Caco-2 (cell line): ENCODE measurements at regions of chr13 and their contacts with region 1.

Region 1: GRCh38 chr13:38914070-38914469 is 76.6 kb downstream of the STOML3 start:
- DNase-seq: no peak
- H3K4me3 ChIP-seq: no peak overlapping the region
- H3K4me3 Mint-ChIP-seq: no peak overlapping the region
- H3K27ac Mint-ChIP-seq: no peak overlapping the region
- H3K4me1 ChIP-seq: peaks cover 5% of the 10 kb centered on the region
- H3K4me1 Mint-ChIP-seq: peaks cover 6% of the 10 kb centered on the region
- H3K27me3 ChIP-seq: no peaks in the 10 kb centered on the region
- H3K27me3 Mint-ChIP-seq: peaks cover 4% of the 10 kb centered on the region
- CTCF ChIP-seq: no peak

Region 2: DNA sequence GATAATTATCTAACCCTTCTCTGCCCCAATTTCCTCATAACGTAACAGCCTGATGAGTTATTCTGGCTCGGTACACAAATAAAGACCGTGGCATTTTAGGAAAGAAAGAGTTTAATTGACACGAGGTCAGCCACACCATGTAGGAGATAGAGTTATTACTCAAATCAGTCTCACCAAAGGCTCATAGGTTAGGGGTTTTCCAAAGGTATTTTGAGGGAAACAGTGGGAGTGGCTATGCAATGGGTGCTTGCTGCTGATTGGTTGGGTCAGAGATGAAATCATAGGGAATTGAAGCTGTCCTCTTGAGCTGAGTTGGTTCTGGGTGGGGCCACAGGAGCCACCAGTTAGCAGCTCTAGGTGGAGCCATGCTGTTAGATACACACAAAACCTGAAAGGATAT is 89.7 kb before region 1 on chr13:
- CTCF ChIA-PET with region 1: no interaction called
- POLR2A ChIA-PET with region 1: no interaction called
- intact Hi-C with region 1: loop called (anchors 5 kb)
- DNase-seq: peak in 1 of 2 experiments; percentile 29
- H3K4me3 ChIP-seq: no peak overlapping the region
- H3K4me3 Mint-ChIP-seq: no peak overlapping the region
- H3K27ac Mint-ChIP-seq: no peak overlapping the region
- H3K4me1 ChIP-seq: no peaks in the 10 kb centered on the region
- H3K4me1 Mint-ChIP-seq: no peaks in the 10 kb centered on the region
- H3K27me3 ChIP-seq: no peaks in the 10 kb centered on the region
- H3K27me3 Mint-ChIP-seq: no peaks in the 10 kb centered on the region
- CTCF ChIP-seq: no peak

Region 3: GRCh38 chr13:38866649-38867048 is 47.4 kb before region 1 on chr13:
- CTCF ChIA-PET with region 1: interaction called, 3 read pairs
- POLR2A ChIA-PET with region 1: no interaction called
- intact Hi-C with region 1: loop called (anchors 1 kb)
- DNase-seq: no peak
- H3K4me3 ChIP-seq: no peak overlapping the region
- H3K4me3 Mint-ChIP-seq: no peak overlapping the region
- H3K27ac Mint-ChIP-seq: no peak overlapping the region
- H3K4me1 ChIP-seq: peaks cover 13% of the 10 kb centered on the region; the same call in 1 of the 2 replicates
- H3K4me1 Mint-ChIP-seq: peaks cover 12% of the 10 kb centered on the region
- H3K27me3 ChIP-seq: no peaks in the 10 kb centered on the region
- H3K27me3 Mint-ChIP-seq: no peaks in the 10 kb centered on the region
- CTCF ChIP-seq: no peak